ENCODE measurements at regions of chr2 and their contacts with region 1.

Region 1: DNA sequence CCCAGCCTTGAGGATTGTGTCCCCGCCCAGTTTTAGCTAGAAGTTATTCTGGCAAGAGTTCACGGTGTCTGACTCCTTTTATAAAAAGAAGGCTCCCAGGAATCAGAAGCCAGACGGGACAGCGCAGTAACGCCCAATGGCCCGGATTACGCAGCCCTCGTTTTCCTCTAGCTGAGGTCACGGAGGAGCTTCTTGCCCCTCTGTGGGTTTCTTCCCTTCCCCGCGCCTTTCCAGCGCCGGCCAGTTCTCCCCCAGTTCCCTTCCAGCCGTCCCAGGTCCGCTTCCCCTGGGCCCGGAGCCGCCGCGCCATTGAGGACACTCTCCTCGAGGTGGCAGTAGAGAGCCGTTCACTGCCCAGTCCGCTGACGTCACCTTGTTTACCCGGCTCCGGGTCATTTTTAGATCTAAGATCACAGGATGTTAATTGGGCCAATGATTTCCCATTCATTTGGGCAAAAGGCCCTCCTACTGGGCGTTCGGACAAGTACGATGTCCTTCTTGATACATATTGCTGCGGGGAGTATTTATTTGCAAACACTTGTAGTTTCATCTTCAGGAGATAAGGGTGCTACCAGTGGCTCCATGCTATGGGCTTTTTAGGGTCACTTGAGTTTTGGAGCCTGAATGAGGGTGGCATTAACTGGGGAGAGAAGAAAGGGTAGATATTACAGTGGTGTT is 81.5 kb upstream of the PPM1B start:
- DNase-seq: peak; percentile 91
- ATAC-seq: peak; percentile 90
- H3K4me3 Mint-ChIP-seq: peak overlapping the region; percentile 67
- H3K27ac Mint-ChIP-seq: peak overlapping the region; percentile 93
- H3K4me1 Mint-ChIP-seq: peaks cover 22% of the 10 kb centered on the region
- H3K27me3 Mint-ChIP-seq: no peaks in the 10 kb centered on the region

Region 2: GRCh38 chr2:43877782-43878464 is 209.3 kb before region 1 on chr2:
- CTCF ChIA-PET with region 1: no interaction called
- POLR2A ChIA-PET with region 1: no interaction called
- intact Hi-C with region 1: no loop called
- DNase-seq: peak; percentile 84
- ATAC-seq: peak; percentile 88
- H3K4me3 Mint-ChIP-seq: no peak overlapping the region
- H3K27ac Mint-ChIP-seq: no peak overlapping the region
- H3K4me1 Mint-ChIP-seq: peaks cover 6% of the 10 kb centered on the region
- H3K27me3 Mint-ChIP-seq: peaks cover 11% of the 10 kb centered on the region

Region 3: DNA sequence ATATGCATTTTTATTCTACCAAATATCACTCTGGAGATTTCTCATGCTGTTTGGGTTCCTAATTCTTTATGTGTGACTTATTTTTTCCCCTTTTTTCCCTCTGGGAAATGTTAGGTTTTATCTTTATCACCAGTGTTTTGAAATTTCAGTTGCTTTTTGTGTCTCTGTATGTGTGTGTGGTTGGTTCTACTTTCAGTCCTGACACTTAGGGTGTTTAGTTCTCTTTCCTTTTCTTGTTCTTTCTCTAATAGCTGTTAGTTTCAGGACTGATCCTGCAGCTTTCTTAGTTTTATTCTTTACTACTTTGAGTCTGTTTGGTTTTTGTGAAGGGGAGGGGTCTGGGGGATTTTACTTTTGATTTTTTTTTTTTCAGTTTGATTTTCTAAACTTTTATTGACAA is 104.6 kb after region 1 on chr2:
- CTCF ChIA-PET with region 1: no interaction called
- POLR2A ChIA-PET with region 1: no interaction called
- intact Hi-C with region 1: no loop called
- DNase-seq: no peak
- ATAC-seq: peak; percentile 96
- H3K4me3 Mint-ChIP-seq: no peak overlapping the region
- H3K27ac Mint-ChIP-seq: peak overlapping the region; percentile 16
- H3K4me1 Mint-ChIP-seq: peaks cover 68% of the 10 kb centered on the region
- H3K27me3 Mint-ChIP-seq: no peaks in the 10 kb centered on the region

Region 4: GRCh38 chr2:44237221-44237620 is 150.0 kb after region 1 on chr2:
- CTCF ChIA-PET with region 1: interaction called, 14 read pairs
- POLR2A ChIA-PET with region 1: no interaction called
- intact Hi-C with region 1: loop called (anchors 2 to 5 kb)
- DNase-seq: peak; percentile 33
- ATAC-seq: peak; percentile 81
- H3K4me3 Mint-ChIP-seq: no peak overlapping the region
- H3K27ac Mint-ChIP-seq: peak overlapping the region; percentile 81
- H3K4me1 Mint-ChIP-seq: peaks cover 32% of the 10 kb centered on the region
- H3K27me3 Mint-ChIP-seq: no peaks in the 10 kb centered on the region

Region 5: DNA sequence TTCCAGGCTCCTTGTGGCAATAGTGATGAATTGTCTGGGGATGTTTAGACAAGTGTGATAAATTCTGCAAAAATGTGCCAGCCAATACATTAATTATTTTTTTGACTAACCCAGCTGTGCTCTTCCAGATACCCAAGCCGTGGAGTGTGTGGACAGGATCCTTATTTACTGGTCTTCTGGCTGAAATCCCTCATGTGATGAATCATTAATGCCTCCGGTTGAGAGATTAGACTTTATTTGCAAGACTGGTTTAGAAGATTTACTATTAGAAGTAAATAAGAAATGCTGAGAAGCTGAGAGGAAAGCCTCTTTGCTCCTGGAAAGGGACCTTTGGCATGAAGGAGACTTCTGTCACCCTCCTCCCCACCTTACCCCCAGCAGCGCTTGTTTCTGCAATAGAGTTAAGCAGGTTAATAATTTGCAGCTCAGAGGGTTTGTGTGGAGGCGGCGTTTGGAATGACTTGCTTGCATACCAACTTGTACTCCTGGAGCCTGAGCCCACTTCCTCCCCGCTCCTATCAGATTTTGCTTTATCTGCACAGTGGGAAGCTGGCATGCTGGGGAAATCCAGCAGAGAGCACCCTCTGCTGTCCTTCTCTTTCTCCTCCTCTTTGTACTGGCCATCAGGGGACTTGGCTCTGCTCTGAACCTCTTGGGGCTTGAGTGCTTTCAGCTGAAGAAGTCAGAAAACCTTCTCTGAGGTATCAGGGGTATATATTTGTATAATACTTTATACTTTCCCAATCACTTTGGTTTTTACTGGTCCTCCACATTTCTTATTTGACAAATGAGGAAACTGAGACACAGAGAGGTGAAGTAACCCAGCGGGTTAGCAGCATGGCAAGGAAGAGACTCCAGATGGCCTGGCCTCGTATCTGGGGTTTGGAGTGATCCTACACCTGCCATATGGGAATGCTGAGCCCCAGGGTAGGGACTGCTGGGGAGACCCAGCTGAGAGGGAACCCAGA is 204.4 kb after region 1 on chr2:
- CTCF ChIA-PET with region 1: interaction called, 5 read pairs
- POLR2A ChIA-PET with region 1: no interaction called
- intact Hi-C with region 1: loop called in 1 of 2 experiments (anchors 2 kb)
- DNase-seq: peak; percentile 6
- ATAC-seq: no peak
- H3K4me3 Mint-ChIP-seq: no peak overlapping the region
- H3K27ac Mint-ChIP-seq: no peak overlapping the region
- H3K4me1 Mint-ChIP-seq: peaks cover 6% of the 10 kb centered on the region
- H3K27me3 Mint-ChIP-seq: peaks cover 5% of the 10 kb centered on the region

Region 6: GRCh38 chr2:44342854-44343253 is 255.7 kb after region 1 on chr2:
- CTCF ChIA-PET with region 1: interaction called, 8 read pairs
- POLR2A ChIA-PET with region 1: no interaction called
- intact Hi-C with region 1: loop called (anchors 1 to 5 kb)
- DNase-seq: peak; percentile 33
- ATAC-seq: no peak
- H3K4me3 Mint-ChIP-seq: no peak overlapping the region
- H3K27ac Mint-ChIP-seq: no peak overlapping the region
- H3K4me1 Mint-ChIP-seq: no peaks in the 10 kb centered on the region
- H3K27me3 Mint-ChIP-seq: no peaks in the 10 kb centered on the region